CD8-positive, alpha-beta memory T cell (primary cell): ENCODE measurements at regions of chr11 and their contacts with region 1.

Region 1: DNA sequence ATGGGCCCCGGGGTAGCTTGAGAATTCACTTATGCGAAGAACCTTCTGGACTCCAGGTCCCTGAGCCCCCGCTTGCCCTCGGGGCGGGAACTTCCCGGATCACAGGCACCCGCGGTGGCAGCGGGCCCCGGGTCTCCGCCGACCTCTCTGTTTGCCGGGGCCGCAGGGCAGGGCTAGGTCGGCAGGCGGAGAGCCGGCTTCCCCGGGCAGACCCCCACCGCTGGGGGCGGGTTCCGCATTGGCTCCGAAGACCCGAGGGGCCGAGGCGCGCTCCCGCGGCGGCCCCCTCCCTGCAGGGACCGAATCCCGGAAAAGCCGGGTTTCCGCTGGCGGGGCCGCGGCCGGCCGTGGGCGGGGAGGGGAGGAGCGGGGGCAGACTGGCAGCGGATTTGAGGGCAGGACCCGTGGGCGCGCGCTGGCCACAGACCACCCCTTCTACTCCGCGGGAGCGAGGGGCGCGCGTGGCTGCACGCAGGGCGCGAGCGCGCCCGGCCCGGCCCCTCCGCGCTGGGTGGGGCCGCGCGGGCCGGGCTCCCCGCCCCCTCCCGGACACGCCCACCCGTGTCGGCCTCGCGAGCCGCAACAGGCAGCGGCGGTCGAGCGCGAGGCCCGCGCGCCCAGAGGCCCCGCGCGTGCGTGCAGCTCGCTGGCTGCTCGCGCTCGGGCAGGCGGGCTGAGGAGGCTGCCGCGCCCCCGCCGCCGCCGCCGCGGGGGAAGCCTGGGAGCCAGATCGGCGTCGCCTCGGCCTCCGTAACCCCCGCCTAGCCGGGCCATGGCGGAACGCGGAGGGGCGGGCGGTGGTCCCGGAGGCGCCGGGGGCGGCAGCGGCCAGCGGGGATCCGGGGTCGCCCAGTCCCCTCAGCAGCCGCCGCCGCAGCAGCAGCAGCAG is at the start of gene PACS1:
- DNase-seq: peak; percentile 76 to 88 (median 81)
- H3K4me3 ChIP-seq: peak within 1 kb of the TSS; percentile 76
- H3K4me3 Mint-ChIP-seq: peak within 1 kb of the TSS; percentile 93 to 98 (median 95)
- H3K27ac ChIP-seq: peak within 1 kb of the TSS; percentile 59
- H3K27ac Mint-ChIP-seq: peak within 1 kb of the TSS; percentile 89 to 99 (median 96)
- H3K4me1 ChIP-seq: peaks cover 35% of the 10 kb centered on the region
- H3K4me1 Mint-ChIP-seq: peaks cover 58 to 73% (median 65%) of the 10 kb centered on the region in 3 donors
- H3K27me3 ChIP-seq: no peaks in the 10 kb centered on the region
- H3K27me3 Mint-ChIP-seq: peaks cover 0 to 3% of the 10 kb centered on the region in 2 donors
- total RNA-seq, gene PACS1: 73.3 to 77.4 TPM

Region 2: DNA sequence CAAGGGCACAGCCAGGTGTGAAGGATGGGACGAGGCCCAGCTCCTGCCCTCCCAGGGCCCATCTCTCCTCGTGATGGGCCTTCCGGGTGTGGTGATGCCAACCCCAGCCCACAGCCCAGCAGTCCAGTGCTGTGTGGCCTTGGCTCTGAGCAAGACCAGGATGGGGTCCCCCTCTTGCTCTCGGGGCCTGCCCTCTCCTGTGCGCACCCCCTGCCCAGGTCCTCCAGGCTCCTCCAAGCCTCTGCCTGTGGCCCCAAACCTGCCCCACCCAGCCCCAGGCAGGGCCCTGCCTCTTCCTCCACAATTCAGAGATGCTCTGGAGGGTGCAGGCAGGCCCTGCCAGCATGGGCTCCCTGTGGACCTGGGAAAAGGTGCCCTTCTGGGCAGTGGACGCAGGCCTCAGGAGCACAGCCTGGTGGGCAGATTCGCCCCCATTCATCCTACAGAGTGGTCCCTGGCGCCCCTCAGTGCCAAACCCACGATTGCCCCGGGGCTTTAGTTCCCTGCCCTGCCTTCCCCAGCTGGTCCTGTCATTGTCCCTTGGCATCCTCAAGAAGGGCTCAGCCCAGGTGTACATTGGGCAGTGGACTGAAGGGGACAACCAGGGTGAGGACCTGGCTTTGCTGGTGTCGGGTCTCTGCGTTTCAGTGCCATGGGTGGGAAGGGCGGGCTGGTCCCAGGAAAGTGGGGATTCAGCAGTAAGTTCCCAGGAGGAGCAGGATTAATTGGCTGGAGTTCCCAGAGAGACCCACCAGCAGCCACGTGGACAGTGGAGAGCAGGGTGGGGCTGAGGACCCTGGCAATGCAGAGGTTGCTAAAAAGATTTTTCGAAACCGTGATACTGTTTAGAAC is 87.8 kb before region 1 on chr11:
- CTCF ChIA-PET with region 1: no interaction called
- POLR2A ChIA-PET with region 1: no interaction called
- DNase-seq: no peak
- H3K4me3 ChIP-seq: no peak overlapping the region
- H3K4me3 Mint-ChIP-seq: no peak overlapping the region
- H3K27ac ChIP-seq: no peak overlapping the region
- H3K27ac Mint-ChIP-seq: peak overlapping the region in 1 of 8 donors; percentile 26
- H3K4me1 ChIP-seq: no peaks in the 10 kb centered on the region
- H3K4me1 Mint-ChIP-seq: no peaks in the 10 kb centered on the region
- H3K27me3 ChIP-seq: no peaks in the 10 kb centered on the region
- H3K27me3 Mint-ChIP-seq: no peaks in the 10 kb centered on the region

Region 3: GRCh38 chr11:66045177-66045639 is 24.8 kb before region 1 on chr11:
- CTCF ChIA-PET with region 1: interaction called, 16 read pairs
- POLR2A ChIA-PET with region 1: no interaction called
- DNase-seq: peak; percentile 77 to 89 (median 82)
- H3K4me3 ChIP-seq: no peak overlapping the region
- H3K4me3 Mint-ChIP-seq: peak overlapping the region in 5 of 7 donors; percentile 16 to 75 (median 55)
- H3K27ac ChIP-seq: no peak overlapping the region
- H3K27ac Mint-ChIP-seq: peak overlapping the region in 4 of 8 donors; percentile 55 to 68 (median 56)
- H3K4me1 ChIP-seq: peaks cover 13% of the 10 kb centered on the region
- H3K4me1 Mint-ChIP-seq: peaks cover 10 to 18% (median 14%) of the 10 kb centered on the region in 3 donors
- H3K27me3 ChIP-seq: no peaks in the 10 kb centered on the region
- H3K27me3 Mint-ChIP-seq: peaks cover 4 to 5% of the 10 kb centered on the region in 2 donors

Region 4: GRCh38 chr11:66081505-66081904 is 11.5 kb after region 1 on chr11:
- CTCF ChIA-PET with region 1: interaction called, 103 read pairs
- POLR2A ChIA-PET with region 1: interaction called, 43 read pairs
- DNase-seq: peak; percentile 59 to 88 (median 74)
- H3K4me3 ChIP-seq: peak overlapping the region; percentile 37
- H3K4me3 Mint-ChIP-seq: peak overlapping the region; percentile 84 to 95 (median 93)
- H3K27ac ChIP-seq: peak overlapping the region; percentile 52
- H3K27ac Mint-ChIP-seq: peak overlapping the region; percentile 94 to 99 (median 99)
- H3K4me1 ChIP-seq: peaks cover 90% of the 10 kb centered on the region
- H3K4me1 Mint-ChIP-seq: peaks cover 83 to 90% (median 86%) of the 10 kb centered on the region in 3 donors
- H3K27me3 ChIP-seq: no peaks in the 10 kb centered on the region
- H3K27me3 Mint-ChIP-seq: peaks cover 0 to 2% of the 10 kb centered on the region in 2 donors

Region 5: DNA sequence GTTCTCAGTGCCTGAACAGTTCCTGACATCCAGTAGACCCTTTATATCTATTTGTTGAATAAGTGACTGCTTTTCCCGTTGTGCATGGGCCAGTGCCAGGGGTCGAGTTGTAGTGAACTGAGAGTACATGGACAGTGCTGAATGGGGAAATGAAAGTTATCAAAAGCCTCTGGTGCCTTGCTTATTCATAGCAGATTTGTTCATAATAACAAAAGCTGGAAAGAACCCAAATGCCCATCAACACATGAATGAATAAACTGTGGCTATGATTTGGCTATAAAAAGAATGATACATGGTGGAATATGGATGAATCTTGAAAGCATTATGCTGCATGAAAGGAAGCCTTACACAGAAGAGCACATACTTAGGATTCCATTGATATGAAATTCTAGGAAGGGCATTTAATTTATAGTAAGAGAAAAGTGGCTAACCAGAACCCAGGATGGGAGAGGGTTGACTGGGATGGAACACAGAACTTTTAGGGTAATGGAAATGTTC is 42.7 kb after region 1 on chr11:
- CTCF ChIA-PET with region 1: interaction called, 67 read pairs
- POLR2A ChIA-PET with region 1: interaction called, 36 read pairs
- DNase-seq: no peak
- H3K4me3 ChIP-seq: no peak overlapping the region
- H3K4me3 Mint-ChIP-seq: peak overlapping the region in 5 of 7 donors; percentile 2 to 58 (median 25)
- H3K27ac ChIP-seq: no peak overlapping the region
- H3K27ac Mint-ChIP-seq: peak overlapping the region; percentile 64 to 88 (median 80)
- H3K4me1 ChIP-seq: peaks cover 84% of the 10 kb centered on the region
- H3K4me1 Mint-ChIP-seq: peaks cover 89 to 99% (median 97%) of the 10 kb centered on the region in 3 donors
- H3K27me3 ChIP-seq: no peaks in the 10 kb centered on the region
- H3K27me3 Mint-ChIP-seq: no peaks in the 10 kb centered on the region

Region 6: DNA sequence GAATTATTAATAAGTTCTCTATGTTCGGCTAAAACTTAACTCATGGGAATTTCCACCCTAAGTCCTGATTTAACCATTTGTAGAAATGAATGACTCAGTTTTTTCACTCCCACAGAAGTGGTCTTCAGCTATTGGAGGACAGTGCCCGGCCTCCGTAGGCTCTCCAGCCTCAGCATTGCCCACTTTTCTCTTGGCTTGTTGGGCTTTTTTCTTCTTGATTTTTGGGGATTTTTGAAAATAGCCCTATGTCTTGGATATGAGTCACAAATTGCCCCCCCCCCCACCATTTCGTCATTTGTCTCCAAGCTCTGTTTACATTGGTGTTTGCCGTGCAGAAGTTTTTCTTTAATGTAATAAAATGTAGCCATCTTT is 66.8 kb after region 1 on chr11:
- CTCF ChIA-PET with region 1: interaction called, 76 read pairs
- POLR2A ChIA-PET with region 1: interaction called, 3 read pairs
- DNase-seq: no peak
- H3K4me3 ChIP-seq: no peak overlapping the region
- H3K4me3 Mint-ChIP-seq: no peak overlapping the region
- H3K27ac ChIP-seq: no peak overlapping the region
- H3K27ac Mint-ChIP-seq: peak overlapping the region in 7 of 8 donors; percentile 13 to 71 (median 50)
- H3K4me1 ChIP-seq: peaks cover 14% of the 10 kb centered on the region
- H3K4me1 Mint-ChIP-seq: peaks cover 45 to 70% (median 62%) of the 10 kb centered on the region in 3 donors
- H3K27me3 ChIP-seq: no peaks in the 10 kb centered on the region
- H3K27me3 Mint-ChIP-seq: peaks cover 0 to 1% of the 10 kb centered on the region in 2 donors